BJ (cell line): ENCODE measurements at regions of chr9 and their contacts with region 1.

Region 1: GRCh38 chr9:34651876-34652601 is at the start of gene IL11RA:
- DNase-seq: no peak
- H3K4me3 ChIP-seq: peak within 1 kb of the TSS; percentile 47
- H3K27me3 ChIP-seq: no peaks in the 10 kb centered on the region
- CTCF ChIP-seq: no peak
- polyA plus RNA-seq, gene IL11RA: 21.8 and 38.4 TPM in 2 replicates

Region 2: DNA sequence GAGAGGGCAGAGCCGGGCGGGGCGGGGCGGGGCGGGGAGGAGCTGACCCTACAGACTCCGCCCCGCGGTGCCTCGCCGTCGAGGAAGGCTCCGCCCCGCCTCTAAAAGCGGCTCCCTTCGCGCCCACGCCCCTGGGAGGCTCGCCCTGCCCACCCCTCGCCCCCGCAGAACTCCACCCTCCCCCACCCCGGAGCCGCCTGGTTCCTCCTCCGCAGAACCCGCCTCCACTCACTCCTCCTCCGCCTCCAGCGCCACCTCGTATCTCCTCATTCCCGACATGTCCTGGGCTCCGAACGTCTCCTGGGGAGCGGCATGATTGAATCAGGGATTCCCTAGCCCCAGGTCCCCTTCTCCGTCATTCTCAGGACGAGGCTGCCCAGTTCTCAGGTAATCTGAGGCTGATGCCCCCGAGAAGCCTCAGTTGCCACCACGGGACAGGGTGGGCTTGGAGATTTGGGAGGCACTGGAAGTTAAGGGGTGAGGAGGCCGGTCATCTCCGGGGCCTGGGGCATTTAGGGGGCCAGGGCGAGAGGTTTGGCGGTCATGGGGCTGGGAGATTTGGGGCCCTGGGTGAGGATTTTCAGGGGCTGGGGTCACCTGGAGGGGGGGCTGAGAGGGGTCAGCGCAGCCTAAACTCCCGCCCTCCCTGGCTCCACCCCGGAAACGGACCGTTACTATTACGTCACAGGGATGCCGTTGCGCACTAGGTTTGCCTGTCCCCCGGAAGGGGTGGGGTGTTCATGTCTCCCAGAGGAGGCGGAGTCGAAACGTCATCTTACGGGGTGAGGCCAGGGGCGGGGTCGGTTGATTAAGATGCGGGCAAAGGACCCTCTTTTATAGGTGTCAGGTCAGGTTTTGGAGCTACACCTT is 13.6 kb after region 1 on chr9:
- CTCF ChIA-PET with region 1: interaction called, 42 read pairs
- POLR2A ChIA-PET with region 1: interaction called, 6 read pairs
- DNase-seq: peak; percentile 58
- H3K4me3 ChIP-seq: peak overlapping the region; percentile 93
- H3K27me3 ChIP-seq: no peaks in the 10 kb centered on the region
- CTCF ChIP-seq: no peak